Dorsolateral prefrontal cortex (tissue), 120 donors: ENCODE measurements at regions of chr11 and their contacts with region 1.

Region 1: GRCh38 chr11:8688414-8689362 is 6.1 kb downstream of the RPL27A start:
- DNase-seq: peak; percentile 92 to 96 (median 94)
- H3K4me3 ChIP-seq: peak overlapping the region; percentile 57 to 96 (median 74)
- H3K27ac ChIP-seq: peak overlapping the region; percentile 17 to 96 (median 85)
- H3K27me3 ChIP-seq: no peaks in the 10 kb centered on the region
- CTCF ChIP-seq: peak in 52 of 56 donors; percentile 19 to 68 (median 47)

Region 2: GRCh38 chr11:8604078-8604723 is 84.5 kb before region 1 on chr11:
- intact Hi-C with region 1: no loop called
- DNase-seq: no peak
- H3K4me3 ChIP-seq: no peak overlapping the region
- H3K27ac ChIP-seq: no peak overlapping the region
- H3K27me3 ChIP-seq: peaks cover 0 to 8% (median 0%) of the 10 kb centered on the region in 45 donors
- CTCF ChIP-seq: peak in 52 of 56 donors; percentile 10 to 57 (median 38)

Region 3: DNA sequence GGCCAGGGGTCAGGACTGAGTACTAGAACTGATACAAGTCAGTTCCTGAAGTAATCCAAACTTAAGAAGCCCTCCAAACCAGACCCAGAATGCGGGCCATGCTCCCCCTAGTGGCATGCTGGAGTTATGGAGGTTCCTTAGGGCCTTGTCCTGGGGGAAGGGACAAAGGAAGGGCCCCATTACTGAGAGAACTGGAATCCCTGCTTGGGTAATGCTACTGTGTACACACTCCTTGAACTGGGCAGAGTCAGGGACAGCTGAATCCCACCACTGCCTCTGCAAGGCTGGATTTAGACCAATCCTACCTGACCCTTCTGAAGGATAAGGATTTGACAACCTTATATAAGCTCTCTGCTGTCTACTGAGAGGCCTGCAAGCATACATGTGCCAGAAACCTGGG is 125.0 kb after region 1 on chr11:
- intact Hi-C with region 1: loop called (anchors 1 to 5 kb)
- DNase-seq: peak; percentile 28 to 77 (median 63)
- H3K4me3 ChIP-seq: no peak overlapping the region
- H3K27ac ChIP-seq: peak overlapping the region in 17 of 59 donors; percentile 3 to 70 (median 34)
- H3K27me3 ChIP-seq: no peaks in the 10 kb centered on the region
- CTCF ChIP-seq: peak; percentile 49 to 93 (median 80)

Region 4: DNA sequence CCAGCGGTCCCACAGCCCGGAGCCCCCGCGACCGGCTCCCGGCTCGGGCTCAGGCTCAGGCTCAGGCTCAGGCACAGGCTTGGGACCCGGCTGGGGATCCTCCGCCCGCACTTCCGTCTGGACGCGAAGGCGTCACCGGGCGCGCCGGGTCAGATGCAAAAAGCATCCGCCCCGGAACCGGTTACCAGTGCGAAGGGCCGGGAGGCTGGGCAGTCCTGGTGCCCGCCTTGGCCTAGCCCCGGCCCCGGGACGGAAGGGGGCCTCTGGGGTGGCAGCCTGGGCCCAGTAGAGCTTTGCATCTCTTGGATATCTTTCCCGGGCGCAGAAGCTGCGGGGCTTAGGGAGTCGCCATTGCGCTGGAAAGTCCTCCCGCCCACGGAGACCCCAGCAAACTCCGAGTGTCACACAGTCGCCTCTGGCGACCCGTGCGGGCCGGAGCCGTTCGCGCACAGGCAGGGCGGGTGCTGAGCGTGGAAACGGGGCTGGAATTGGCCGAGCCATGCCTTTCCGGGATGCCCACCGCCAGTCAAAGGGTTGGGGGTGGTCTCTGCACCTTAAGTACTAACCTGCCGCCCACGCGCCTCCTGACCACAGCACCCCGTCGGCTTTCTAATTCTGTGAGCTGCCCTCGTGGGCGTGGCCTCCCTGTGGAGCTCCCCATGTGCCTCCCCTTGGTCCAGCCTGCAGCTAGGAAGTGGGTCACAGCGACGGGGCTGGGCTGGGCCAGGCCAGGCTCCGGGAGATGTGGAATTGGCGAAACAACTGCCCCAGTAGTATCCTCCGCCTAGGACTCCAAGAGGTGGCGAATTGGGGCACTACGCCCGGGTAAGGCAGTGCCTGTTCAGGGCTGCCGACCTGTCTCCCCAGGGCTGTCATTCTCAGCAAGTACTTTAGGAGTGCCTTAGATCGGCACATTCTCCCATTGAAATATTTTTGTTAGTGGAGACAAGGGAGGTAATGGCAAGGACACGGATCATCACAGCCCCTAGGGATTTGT is 275.9 kb after region 1 on chr11 and contains the start of gene TMEM9B:
- intact Hi-C with region 1: loop called (anchors 5 to 10 kb)
- DNase-seq: peak; percentile 73 to 94 (median 90)
- H3K4me3 ChIP-seq: peak within 1 kb of the TSS; percentile 70 to 98 (median 91)
- H3K27ac ChIP-seq: peak within 1 kb of the TSS; percentile 56 to 97 (median 91)
- H3K27me3 ChIP-seq: no peaks in the 10 kb centered on the region
- CTCF ChIP-seq: peak in 13 of 56 donors; percentile 3 to 48 (median 17)
- total RNA-seq, gene TMEM9B: 33.7 to 59.4 (median 47.3) TPM

Region 5: DNA sequence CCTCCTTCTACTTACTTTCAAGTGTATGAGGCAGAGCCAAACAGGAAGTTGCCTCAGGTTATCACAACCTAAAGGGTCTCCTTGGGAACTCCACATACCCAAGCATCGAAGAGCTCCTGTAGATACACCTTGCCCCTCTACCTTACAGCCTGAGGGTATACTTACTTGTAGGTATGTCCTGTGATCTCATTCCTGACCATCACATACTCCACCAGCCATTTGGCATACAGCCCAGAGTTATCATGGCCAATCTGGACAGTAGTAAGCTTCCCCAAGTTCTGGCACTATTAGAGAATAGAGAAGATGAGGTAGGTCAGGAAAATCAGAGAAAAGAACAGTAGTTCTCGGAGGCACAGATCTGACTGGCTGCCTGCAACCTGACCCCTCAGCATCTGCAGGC is 456.1 kb after region 1 on chr11:
- intact Hi-C with region 1: loop called in 1 of 2 experiments (anchors 10 kb)
- DNase-seq: peak in 1 of 10 donors; percentile 71
- H3K4me3 ChIP-seq: no peak overlapping the region
- H3K27ac ChIP-seq: peak overlapping the region in 45 of 59 donors; percentile 0 to 93 (median 77)
- H3K27me3 ChIP-seq: no peaks in the 10 kb centered on the region
- CTCF ChIP-seq: no peak